K562 (cell line): ENCODE measurements at regions of chr4 and their contacts with region 1.

Region 1: DNA sequence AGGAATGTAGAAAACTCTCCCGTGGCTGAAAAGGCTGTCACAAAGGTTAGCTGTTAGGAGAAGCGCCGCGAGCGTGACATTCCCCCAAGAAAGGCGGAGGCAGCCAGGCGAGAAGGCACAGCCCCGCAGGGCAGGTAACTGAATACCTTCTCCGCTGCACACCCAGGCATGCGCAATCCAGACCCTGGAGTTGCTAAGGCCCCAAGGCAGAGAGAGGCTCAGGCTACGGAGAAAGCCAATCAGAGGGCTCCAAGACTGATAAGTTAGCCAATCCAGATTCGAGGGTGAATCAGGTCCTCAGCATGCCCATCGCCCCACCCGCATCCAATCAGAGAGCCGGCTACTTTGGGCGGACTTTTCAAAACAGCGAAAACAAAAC is 485 bp upstream of the CCNG2 start:
- DNase-seq: peak; percentile 95 to 99 (median 97)
- ATAC-seq: peak; percentile 95
- H3K4me3 ChIP-seq: peak overlapping the region; percentile 73
- H3K27ac ChIP-seq: peak overlapping the region; percentile 88
- H3K4me1 ChIP-seq: peaks cover 3 to 17% of the 10 kb centered on the region in 2 experiments; a peak in 4 of 5 replicates
- H3K27me3 ChIP-seq: no peaks in the 10 kb centered on the region
- CTCF ChIP-seq: no peak
- EP300 ChIP-seq: no peak
- POLR2A ChIP-seq: peak; percentile 75
- RAD21 ChIP-seq: no peak

Region 2: GRCh38 chr4:76949276-76950051 is 207.1 kb before region 1 on chr4 and contains the start of gene SEPTIN11:
- CTCF ChIA-PET with region 1: no interaction called
- POLR2A ChIA-PET with region 1: no interaction called
- in situ Hi-C with region 1: no loop called
- intact Hi-C with region 1: loop called (anchors 2 kb)
- DNase-seq: peak; percentile 90 to 95 (median 94)
- ATAC-seq: peak; percentile 84
- H3K4me3 ChIP-seq: peak within 1 kb of the TSS; percentile 80
- H3K27ac ChIP-seq: peak within 1 kb of the TSS; percentile 82
- H3K4me1 ChIP-seq: peaks cover 36 to 46% of the 10 kb centered on the region in 2 experiments
- H3K27me3 ChIP-seq: no peaks in the 10 kb centered on the region
- CTCF ChIP-seq: no peak
- EP300 ChIP-seq: no peak
- POLR2A ChIP-seq: peak; percentile 86
- RAD21 ChIP-seq: no peak
- polyA plus RNA-seq, gene SEPTIN11: 25.7 to 26.7 TPM

Region 3: DNA sequence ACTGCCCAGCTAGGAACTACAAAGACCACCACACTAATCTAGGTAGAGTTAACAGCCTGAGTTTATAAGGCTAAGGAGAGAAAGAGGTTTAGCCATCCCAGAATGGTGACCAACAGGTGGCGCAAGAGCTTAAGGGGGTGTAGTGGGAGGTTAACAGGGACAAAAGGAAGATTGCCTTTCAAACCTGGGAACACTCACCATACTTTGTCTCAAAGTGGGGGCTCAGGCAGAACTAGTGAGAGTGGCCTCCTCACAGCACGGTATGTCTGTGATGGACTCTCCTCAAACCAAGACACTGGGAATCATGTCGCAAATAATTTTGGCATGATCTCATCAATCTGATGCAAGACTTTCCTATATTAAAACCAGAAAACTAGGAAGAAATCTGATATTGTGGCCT is 104.2 kb before region 1 on chr4:
- CTCF ChIA-PET with region 1: interaction called, 6 read pairs
- POLR2A ChIA-PET with region 1: interaction called, 4 read pairs
- in situ Hi-C with region 1: no loop called
- intact Hi-C with region 1: loop called (anchors 5 kb)
- DNase-seq: peak; percentile 47 to 75 (median 56)
- ATAC-seq: peak; percentile 90
- H3K4me3 ChIP-seq: no peak overlapping the region
- H3K27ac ChIP-seq: no peak overlapping the region
- H3K4me1 ChIP-seq: no peaks in the 10 kb centered on the region
- H3K27me3 ChIP-seq: no peaks in the 10 kb centered on the region
- CTCF ChIP-seq: peak; percentile 66 to 80 (median 76)
- EP300 ChIP-seq: no peak
- POLR2A ChIP-seq: no peak
- RAD21 ChIP-seq: peak; percentile 68 to 70

Region 4: GRCh38 chr4:77075869-77076799 is 80.4 kb before region 1 on chr4 and contains the start of gene CCNI:
- CTCF ChIA-PET with region 1: no interaction called
- POLR2A ChIA-PET with region 1: interaction called, 3 read pairs
- in situ Hi-C with region 1: no loop called
- intact Hi-C with region 1: loop called (anchors 2 kb)
- DNase-seq: peak; percentile 93 to 98 (median 95)
- ATAC-seq: peak; percentile 79
- H3K4me3 ChIP-seq: peak within 1 kb of the TSS; percentile 81
- H3K27ac ChIP-seq: peak within 1 kb of the TSS; percentile 99
- H3K4me1 ChIP-seq: peaks cover 3% of the 10 kb centered on the region in 2 experiments; a peak in 2 of 5 replicates
- H3K27me3 ChIP-seq: no peaks in the 10 kb centered on the region
- CTCF ChIP-seq: no peak
- EP300 ChIP-seq: peak; percentile 24
- POLR2A ChIP-seq: peak; percentile 97
- RAD21 ChIP-seq: no peak
- polyA plus RNA-seq, gene CCNI: 43.3 to 60.2 TPM

Region 5: DNA sequence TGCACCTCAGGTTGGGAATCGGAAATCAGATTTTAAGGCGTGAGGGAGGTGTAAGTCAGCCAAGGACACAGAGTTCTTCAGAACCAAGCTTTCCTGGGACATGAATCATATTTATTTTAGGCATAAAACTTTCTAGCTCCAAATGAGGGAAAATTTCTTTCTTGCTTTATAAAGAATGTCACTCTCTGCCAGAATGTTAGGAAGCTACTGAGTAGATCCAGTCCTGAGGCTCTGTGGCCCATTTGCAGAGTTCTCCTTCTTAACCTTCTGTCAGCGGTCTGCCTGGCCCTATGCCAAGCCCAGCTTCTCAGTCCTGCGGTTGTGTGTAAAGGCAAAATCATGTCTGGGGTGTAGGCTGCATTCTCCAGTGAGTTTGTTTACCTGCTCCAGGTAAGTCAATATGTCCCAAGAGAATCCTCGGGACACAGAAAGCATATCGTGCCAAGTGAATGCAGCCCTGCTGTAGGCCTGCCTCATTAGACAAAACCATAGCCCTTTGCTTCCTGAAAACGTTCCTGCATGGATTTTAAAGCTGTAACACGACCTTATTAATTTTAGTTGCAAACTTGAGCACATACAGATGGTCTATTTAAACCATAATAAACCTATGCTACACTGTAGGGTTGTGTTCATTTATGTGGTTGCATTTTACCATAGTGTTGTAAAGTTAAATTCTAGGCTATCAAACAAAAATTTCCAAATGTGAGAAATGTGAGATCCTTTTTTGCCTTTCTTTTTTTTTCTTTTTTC is 51.6 kb before region 1 on chr4:
- CTCF ChIA-PET with region 1: no interaction called
- POLR2A ChIA-PET with region 1: no interaction called
- in situ Hi-C with region 1: no loop called
- intact Hi-C with region 1: loop called (anchors 5 kb)
- DNase-seq: peak in 1 of 4 experiments; percentile 37
- ATAC-seq: no peak; the same call in 2 of the 3 replicates
- H3K4me3 ChIP-seq: no peak overlapping the region
- H3K27ac ChIP-seq: no peak overlapping the region
- H3K4me1 ChIP-seq: no peaks in the 10 kb centered on the region
- H3K27me3 ChIP-seq: peaks cover 0 to 4% of the 10 kb centered on the region in 2 experiments
- CTCF ChIP-seq: no peak
- EP300 ChIP-seq: no peak
- POLR2A ChIP-seq: no peak
- RAD21 ChIP-seq: no peak